Activated CD4-positive, alpha-beta memory T cell treated with anti-CD3 and anti-CD28 coated beads for 36 hours (primary cell): ENCODE measurements at regions of chr19 and their contacts with region 1.

Region 1: DNA sequence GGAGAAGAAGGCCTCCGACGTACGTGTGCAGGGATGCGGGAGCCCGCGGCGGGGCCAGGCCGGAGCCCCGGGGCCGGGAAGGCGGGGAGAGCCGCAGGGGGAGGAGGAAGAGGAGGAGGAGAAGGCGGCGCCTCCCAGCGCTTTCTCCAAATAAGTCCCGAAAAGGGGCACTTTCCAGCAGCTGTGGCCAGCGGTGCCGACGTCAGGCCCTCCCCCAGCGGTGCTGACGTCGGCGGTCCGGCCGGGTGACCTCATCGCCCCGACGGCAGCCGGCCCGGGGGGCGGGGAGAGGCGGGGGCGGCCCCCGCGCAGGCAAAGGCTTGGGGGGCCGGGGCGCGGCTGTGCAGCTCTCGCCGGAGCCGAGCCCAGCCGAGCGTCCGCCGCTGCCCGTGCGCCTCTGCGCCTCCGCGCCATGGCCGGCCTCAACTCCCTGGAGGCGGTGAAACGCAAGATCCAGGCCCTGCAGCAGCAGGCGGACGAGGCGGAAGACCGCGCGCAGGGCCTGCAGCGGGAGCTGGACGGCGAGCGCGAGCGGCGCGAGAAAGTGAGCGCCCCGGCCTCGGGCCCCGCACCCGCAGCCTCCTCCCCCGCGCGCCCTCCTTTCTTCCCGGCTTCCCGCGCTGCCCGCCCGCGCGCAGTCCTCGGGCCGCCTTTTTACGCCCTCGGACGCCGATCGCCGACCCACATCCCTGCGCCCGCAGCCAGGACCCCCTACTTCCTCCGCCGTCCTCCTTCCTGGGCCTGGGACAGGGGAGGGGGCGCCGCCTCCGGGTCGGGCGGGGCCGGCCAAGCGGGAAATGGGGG is at the start of gene TPM4:
- DNase-seq: peak; percentile 95
- H3K4me3 Mint-ChIP-seq: peak within 1 kb of the TSS; percentile 97
- H3K27ac Mint-ChIP-seq: peak within 1 kb of the TSS; percentile 97
- H3K4me1 Mint-ChIP-seq: peaks cover 56% of the 10 kb centered on the region
- H3K27me3 Mint-ChIP-seq: no peaks in the 10 kb centered on the region
- total RNA-seq, gene TPM4: 497 to 515 TPM

Region 2: GRCh38 chr19:15297416-15298224 is 778.7 kb before region 1 on chr19:
- CTCF ChIA-PET with region 1: no interaction called
- POLR2A ChIA-PET with region 1: no interaction called
- intact Hi-C with region 1: loop called (anchors 2 kb)
- DNase-seq: peak; percentile 43
- H3K4me3 Mint-ChIP-seq: peak overlapping the region; percentile 33
- H3K27ac Mint-ChIP-seq: peak overlapping the region; percentile 95
- H3K4me1 Mint-ChIP-seq: peaks cover 98% of the 10 kb centered on the region
- H3K27me3 Mint-ChIP-seq: no peaks in the 10 kb centered on the region

Region 3: DNA sequence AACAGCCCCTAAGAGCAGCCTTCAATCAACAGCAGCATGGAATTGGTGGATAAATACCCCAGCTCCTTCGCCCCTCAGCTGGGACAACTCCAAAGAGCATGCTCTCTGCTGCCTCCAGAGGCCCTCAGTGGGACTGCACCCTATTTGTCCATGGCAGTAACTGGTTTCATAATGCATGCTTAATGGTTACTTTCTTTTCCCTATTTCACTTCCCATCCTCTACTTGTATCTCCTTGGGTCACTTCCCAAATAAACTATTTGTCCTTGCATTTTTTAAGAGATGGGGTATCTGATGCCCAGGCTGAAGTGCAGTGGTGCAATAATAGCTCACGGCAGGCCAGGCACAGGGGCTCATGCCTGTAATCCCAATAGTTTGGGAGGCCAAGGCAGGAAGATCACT is 13.6 kb before region 1 on chr19:
- CTCF ChIA-PET with region 1: interaction called, 41 read pairs
- POLR2A ChIA-PET with region 1: interaction called, 6 read pairs
- intact Hi-C with region 1: no loop called
- DNase-seq: peak; percentile 80
- H3K4me3 Mint-ChIP-seq: no peak overlapping the region
- H3K27ac Mint-ChIP-seq: peak overlapping the region; percentile 38
- H3K4me1 Mint-ChIP-seq: peaks cover 30% of the 10 kb centered on the region
- H3K27me3 Mint-ChIP-seq: peaks cover 2% of the 10 kb centered on the region

Region 4: DNA sequence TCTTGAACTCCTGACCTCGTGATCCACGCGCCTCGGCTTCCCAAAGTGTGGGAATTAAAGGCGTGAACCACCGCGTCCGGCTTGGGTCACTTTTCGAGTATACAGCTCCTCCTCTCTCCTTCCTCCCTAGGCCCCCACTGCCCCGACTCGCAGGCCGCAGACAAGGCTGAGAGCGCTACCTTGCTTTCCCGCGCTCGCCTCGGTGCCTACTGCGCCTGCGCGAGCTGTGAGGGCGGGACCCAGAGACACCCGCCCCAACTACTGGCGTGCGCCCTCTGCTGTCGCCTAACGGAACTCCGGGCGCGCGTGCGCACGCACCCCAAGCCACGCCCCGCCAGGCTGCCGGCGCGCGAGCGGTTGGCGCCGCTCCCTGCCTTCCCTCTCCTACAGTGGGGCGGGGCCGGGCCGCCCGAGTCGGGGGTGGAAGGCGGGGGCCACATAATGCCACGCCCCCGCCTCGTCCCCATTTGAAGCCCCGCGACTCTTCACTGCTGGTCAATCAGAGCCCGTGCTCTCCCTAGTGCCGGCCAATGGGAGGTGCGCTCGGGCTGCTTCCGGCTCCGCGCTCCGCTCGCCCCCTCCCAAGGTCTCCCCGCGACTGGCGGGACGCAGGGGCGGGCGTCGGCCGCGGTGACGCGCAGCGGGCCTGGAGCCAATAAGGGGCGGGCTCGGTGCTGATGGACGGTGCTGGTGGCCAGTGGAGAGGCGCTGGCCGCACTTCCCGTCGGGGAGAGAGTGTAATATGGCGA is 35.0 kb after region 1 on chr19 and contains the start of gene RAB8A:
- CTCF ChIA-PET with region 1: interaction called, 13 read pairs
- POLR2A ChIA-PET with region 1: interaction called, 15 read pairs
- intact Hi-C with region 1: loop called (anchors 1 kb)
- DNase-seq: peak; percentile 99
- H3K4me3 Mint-ChIP-seq: peak within 1 kb of the TSS; percentile 98
- H3K27ac Mint-ChIP-seq: peak within 1 kb of the TSS; percentile 97
- H3K4me1 Mint-ChIP-seq: peaks cover 40% of the 10 kb centered on the region
- H3K27me3 Mint-ChIP-seq: no peaks in the 10 kb centered on the region
- total RNA-seq, gene RAB8A: 146 to 154 TPM

Region 5: DNA sequence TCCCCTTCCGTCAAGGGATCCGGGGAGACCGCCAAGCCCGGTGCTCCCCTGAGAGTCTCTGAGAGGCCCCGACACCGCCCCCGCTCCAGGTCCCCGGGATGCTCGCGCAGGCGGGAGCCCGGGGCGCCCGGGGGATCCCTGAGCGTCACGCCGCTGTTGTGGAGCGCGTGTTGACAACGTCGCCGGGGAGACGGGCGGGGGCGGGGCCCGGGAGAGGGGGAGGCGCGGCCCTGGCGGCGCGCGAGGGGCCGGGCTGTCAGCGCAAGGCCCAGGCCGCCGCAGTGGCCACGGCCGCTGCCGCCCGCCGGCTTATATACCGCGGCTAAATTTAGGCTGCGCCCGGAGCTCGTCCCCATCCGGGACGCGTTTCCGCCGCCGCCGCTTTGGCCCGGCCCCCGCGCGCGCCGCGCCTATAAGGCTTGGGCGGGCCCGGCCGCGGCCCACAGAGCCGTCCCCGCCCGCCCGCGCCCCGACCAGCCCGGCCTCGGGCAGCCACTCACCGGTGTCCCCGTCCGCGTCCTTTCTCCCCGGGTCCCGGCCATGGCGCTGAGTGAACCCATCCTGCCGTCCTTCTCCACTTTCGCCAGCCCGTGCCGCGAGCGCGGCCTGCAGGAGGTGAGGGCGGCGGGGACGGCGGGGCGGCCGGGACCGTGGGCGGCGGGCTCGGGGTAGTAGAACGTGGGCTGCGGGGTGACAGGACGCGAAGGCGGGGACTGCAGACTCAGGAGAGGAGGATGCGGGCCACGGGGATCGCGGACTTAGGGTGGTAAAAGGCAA is 248.2 kb after region 1 on chr19 and contains the start of gene KLF2:
- CTCF ChIA-PET with region 1: no interaction called
- POLR2A ChIA-PET with region 1: no interaction called
- intact Hi-C with region 1: loop called (anchors 10 kb)
- DNase-seq: peak; percentile 89
- H3K4me3 Mint-ChIP-seq: peak within 1 kb of the TSS; percentile 57
- H3K27ac Mint-ChIP-seq: no peak within 1 kb of the TSS
- H3K4me1 Mint-ChIP-seq: peaks cover 36% of the 10 kb centered on the region
- H3K27me3 Mint-ChIP-seq: peaks cover 19% of the 10 kb centered on the region
- total RNA-seq, gene KLF2: 1.7 TPM